Activated CD4-positive, alpha-beta memory T cell treated with anti-CD3 and anti-CD28 coated beads for 36 hours (primary cell): ENCODE measurements at regions of chr3 and their contacts with region 1.

Region 1: GRCh38 chr3:125141596-125142419 is 70.7 kb downstream of the SLC12A8 start:
- DNase-seq: peak; percentile 85
- H3K4me3 Mint-ChIP-seq: peak overlapping the region; percentile 71
- H3K27ac Mint-ChIP-seq: peak overlapping the region; percentile 69
- H3K4me1 Mint-ChIP-seq: peaks cover 35% of the 10 kb centered on the region
- H3K27me3 Mint-ChIP-seq: peaks cover 40% of the 10 kb centered on the region

Region 2: DNA sequence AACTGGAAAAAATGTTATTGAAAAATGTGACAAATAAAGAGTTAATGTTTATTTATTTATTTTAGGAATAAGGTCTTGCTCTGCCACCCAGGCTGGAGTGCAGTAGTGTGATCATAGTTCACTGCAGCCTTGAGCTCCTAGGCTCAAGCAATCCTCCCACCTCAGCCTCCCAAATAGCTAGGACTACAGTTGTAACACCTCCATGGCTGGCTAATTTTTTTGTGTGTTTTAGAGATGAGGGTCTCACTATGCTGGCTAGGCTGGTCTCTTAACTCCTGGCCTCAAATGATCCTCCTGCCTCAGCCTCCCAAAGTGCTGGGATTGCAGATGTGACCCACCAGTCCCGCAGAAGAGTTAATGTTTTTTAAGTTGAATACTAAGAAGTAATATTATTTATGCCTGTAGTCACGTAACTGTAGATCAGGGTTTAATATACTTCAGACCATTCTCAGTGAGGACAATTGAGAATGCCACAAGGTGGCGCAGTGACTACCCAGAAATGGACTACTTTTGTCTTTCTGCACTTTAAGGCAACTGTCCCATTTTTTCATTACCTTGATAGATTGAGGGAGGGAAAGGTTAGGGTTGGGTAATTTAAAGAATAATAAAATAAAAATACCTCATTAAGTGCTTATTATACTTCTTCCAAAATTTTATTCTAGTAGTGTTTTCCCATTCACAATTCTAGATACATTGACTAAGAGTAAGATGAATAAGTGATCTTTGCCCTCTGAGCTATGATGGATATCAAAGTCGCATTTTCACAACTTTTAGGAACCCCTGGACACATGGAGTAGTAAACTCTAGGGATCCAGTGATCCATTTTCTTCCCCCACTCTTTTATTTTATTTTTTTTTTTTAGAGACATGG is 213.2 kb before region 1 on chr3:
- CTCF ChIA-PET with region 1: no interaction called
- POLR2A ChIA-PET with region 1: no interaction called
- intact Hi-C with region 1: loop called (anchors 5 kb)
- DNase-seq: peak; percentile 70
- H3K4me3 Mint-ChIP-seq: no peak overlapping the region
- H3K27ac Mint-ChIP-seq: no peak overlapping the region
- H3K4me1 Mint-ChIP-seq: no peaks in the 10 kb centered on the region
- H3K27me3 Mint-ChIP-seq: peaks cover 3% of the 10 kb centered on the region

Region 3: DNA sequence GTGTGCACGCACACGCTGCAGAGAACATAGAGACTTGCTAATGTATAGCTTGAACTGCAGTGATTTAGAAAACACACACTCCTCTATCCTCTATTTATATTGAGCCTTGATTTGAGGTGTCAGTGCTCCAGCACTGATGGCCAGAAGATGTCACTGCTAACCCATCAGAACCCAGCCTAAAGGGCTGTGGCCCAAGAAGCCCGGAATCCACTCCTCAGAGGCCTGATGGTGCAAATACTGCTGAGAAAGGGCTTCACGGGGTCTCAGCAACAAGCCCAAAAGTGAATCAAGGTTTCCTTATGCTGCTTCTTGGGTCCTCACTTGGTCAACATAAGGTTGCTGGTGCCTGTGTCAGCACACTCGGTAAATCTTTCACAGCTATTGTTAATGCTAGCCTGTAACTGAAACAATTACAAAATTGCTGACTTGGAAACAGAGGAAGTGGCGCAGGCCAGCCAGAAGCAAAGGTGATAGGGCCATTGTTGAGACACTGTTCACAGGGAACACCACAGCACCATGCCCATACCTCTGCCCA is 146.3 kb before region 1 on chr3:
- CTCF ChIA-PET with region 1: no interaction called
- POLR2A ChIA-PET with region 1: no interaction called
- intact Hi-C with region 1: loop called (anchors 5 kb)
- DNase-seq: peak; percentile 61
- H3K4me3 Mint-ChIP-seq: no peak overlapping the region
- H3K27ac Mint-ChIP-seq: no peak overlapping the region
- H3K4me1 Mint-ChIP-seq: no peaks in the 10 kb centered on the region
- H3K27me3 Mint-ChIP-seq: no peaks in the 10 kb centered on the region

Region 4: GRCh38 chr3:125055913-125056745 is 85.7 kb before region 1 on chr3 and contains the start of gene HEG1:
- CTCF ChIA-PET with region 1: interaction called, 6 read pairs
- POLR2A ChIA-PET with region 1: no interaction called
- intact Hi-C with region 1: loop called (anchors 2 kb)
- DNase-seq: peak; percentile 83
- H3K4me3 Mint-ChIP-seq: peak within 1 kb of the TSS; percentile 88
- H3K27ac Mint-ChIP-seq: peak within 1 kb of the TSS; percentile 60
- H3K4me1 Mint-ChIP-seq: peaks cover 40% of the 10 kb centered on the region
- H3K27me3 Mint-ChIP-seq: peaks cover 6% of the 10 kb centered on the region
- total RNA-seq, gene HEG1: 6.0 to 7.9 TPM

Region 5: DNA sequence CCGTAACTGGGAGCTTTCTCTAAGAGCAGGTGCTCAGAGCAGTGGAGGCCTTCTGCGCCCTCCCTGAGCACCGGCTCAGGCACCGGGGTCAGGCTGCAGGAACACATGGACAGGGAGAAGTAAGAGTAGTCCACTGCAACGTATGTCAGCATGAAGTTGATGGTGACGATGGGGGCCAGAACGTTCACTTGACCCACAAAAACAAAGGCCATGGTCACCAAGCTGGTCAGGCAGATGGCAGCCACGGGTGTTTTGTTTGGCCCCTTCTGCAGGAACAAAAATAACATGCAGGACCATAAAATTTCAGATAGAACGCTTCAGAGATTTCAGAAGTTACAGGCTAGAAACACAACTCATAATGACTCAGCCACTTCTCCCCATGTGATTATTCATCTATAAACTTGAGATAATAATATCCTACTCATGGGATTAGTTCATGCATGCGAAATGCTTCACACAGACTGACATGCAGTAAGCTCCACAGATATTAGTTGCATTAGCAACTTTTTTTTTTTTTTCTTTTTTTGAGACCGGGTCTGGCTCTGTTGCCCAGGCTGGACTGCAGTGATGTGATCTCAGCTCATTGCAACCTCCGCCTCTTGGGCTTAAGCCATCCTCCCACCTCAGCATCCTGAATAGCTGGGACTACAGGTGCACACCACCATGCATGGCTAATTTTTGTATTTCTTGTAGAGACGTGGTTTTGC is 33.8 kb before region 1 on chr3:
- CTCF ChIA-PET with region 1: interaction called, 5 read pairs
- POLR2A ChIA-PET with region 1: no interaction called
- intact Hi-C with region 1: loop called (anchors 1 kb)
- DNase-seq: no peak
- H3K4me3 Mint-ChIP-seq: no peak overlapping the region
- H3K27ac Mint-ChIP-seq: no peak overlapping the region
- H3K4me1 Mint-ChIP-seq: peaks cover 26% of the 10 kb centered on the region
- H3K27me3 Mint-ChIP-seq: peaks cover 23% of the 10 kb centered on the region

Region 6: GRCh38 chr3:125374996-125375941 is 233.5 kb after region 1 on chr3 and contains the start of gene ZNF148:
- CTCF ChIA-PET with region 1: no interaction called
- POLR2A ChIA-PET with region 1: no interaction called
- intact Hi-C with region 1: loop called (anchors 10 kb)
- DNase-seq: peak; percentile 93
- H3K4me3 Mint-ChIP-seq: peak within 1 kb of the TSS; percentile 98
- H3K27ac Mint-ChIP-seq: peak within 1 kb of the TSS; percentile 94
- H3K4me1 Mint-ChIP-seq: peaks cover 36% of the 10 kb centered on the region
- H3K27me3 Mint-ChIP-seq: no peaks in the 10 kb centered on the region
- total RNA-seq, gene ZNF148: 27.9 to 29.9 TPM